PC-9 (cell line): ENCODE measurements at regions of chr4 and their contacts with region 1.

Region 1: GRCh38 chr4:183182873-183183725 is 84.0 kb downstream of the WWC2 start:
- DNase-seq: peak; percentile 73 to 84
- H3K4me3 ChIP-seq: no peak overlapping the region
- H3K27ac ChIP-seq: 0 out of 2 replicates have a peak overlapping the region, but pooled peaks have one; percentile 29
- H3K4me1 ChIP-seq: peaks cover 15% of the 10 kb centered on the region; the same call in 1 of the 2 replicates
- H3K27me3 ChIP-seq: no peaks in the 10 kb centered on the region
- CTCF ChIP-seq: no peak

Region 2: DNA sequence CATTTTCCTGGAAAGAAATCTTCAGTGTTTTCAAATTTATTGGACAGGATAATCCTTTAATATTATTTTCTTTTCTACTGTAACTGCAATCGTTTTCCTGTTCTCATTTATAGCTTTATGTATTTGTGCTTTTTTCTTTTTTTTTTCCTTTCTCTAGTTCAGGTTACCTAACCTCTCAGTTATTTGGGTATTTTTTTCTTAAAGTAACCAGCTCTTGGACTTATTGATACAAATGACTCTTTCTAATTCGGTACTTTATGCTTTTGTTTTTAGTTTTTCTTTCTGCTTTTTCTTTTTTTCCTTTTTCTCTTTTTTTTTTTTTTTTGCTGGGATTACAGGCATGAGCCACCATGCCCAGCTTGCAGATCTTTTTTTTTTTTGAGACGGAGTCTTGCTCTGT is 58.9 kb before region 1 on chr4:
- CTCF ChIA-PET with region 1: no interaction called
- POLR2A ChIA-PET with region 1: interaction called, 27 read pairs
- intact Hi-C with region 1: no loop called
- DNase-seq: no peak
- H3K4me3 ChIP-seq: no peak overlapping the region
- H3K27ac ChIP-seq: no peak overlapping the region
- H3K4me1 ChIP-seq: peaks cover 2% of the 10 kb centered on the region
- H3K27me3 ChIP-seq: no peaks in the 10 kb centered on the region
- CTCF ChIP-seq: no peak

Region 3: GRCh38 chr4:183130328-183131173 is 52.5 kb before region 1 on chr4:
- CTCF ChIA-PET with region 1: no interaction called
- POLR2A ChIA-PET with region 1: no interaction called
- intact Hi-C with region 1: loop called (anchors 5 kb)
- DNase-seq: peak; percentile 49 to 58
- H3K4me3 ChIP-seq: no peak overlapping the region
- H3K27ac ChIP-seq: no peak overlapping the region
- H3K4me1 ChIP-seq: peaks cover 9% of the 10 kb centered on the region; the same call in 1 of the 2 replicates
- H3K27me3 ChIP-seq: no peaks in the 10 kb centered on the region
- CTCF ChIP-seq: no peak

Region 4: DNA sequence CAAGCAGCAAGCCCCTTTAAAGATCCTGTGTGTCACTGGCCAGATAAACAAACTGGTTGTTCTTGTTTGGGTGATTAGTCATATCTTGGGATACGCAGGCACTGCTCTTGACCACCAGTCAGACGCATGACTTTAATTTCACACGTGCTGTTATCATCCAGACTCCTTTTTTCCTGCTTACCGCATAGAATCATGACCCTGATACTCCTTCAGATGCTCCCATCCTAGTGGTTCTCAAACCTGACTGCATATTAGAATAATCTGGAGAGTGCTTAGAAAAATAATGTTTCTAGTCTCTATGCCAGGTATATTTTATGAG is 58.2 kb after region 1 on chr4:
- CTCF ChIA-PET with region 1: no interaction called
- POLR2A ChIA-PET with region 1: no interaction called
- intact Hi-C with region 1: loop called (anchors 2 kb)
- DNase-seq: peak; percentile 51 to 87
- H3K4me3 ChIP-seq: no peak overlapping the region
- H3K27ac ChIP-seq: peak overlapping the region; percentile 57
- H3K4me1 ChIP-seq: peaks cover 28% of the 10 kb centered on the region
- H3K27me3 ChIP-seq: no peaks in the 10 kb centered on the region
- CTCF ChIP-seq: no peak

Region 5: DNA sequence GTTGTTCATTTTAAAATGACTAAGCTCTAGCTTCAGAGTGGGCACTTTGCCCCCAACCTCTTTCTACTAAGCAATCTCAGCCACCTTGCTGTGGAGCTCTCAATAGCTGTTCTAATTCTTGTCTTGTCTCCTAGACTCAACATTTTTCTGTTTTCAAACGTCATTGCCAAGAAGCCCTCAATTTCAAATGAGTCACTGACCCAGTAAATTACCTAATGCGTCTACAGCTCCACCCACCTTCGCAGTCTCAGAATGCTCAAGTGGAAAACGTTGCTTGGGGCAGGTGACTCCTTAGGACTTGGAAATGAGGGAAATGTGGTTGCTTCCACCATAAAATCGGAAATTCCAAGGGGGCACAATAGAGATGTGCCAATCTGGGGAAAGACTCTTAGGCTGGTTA is 380.8 kb after region 1 on chr4:
- CTCF ChIA-PET with region 1: no interaction called
- POLR2A ChIA-PET with region 1: no interaction called
- intact Hi-C with region 1: no loop called
- DNase-seq: peak in 1 of 2 experiments; percentile 5
- H3K4me3 ChIP-seq: no peak overlapping the region
- H3K27ac ChIP-seq: no peak overlapping the region
- H3K4me1 ChIP-seq: no peaks in the 10 kb centered on the region
- H3K27me3 ChIP-seq: no peaks in the 10 kb centered on the region
- CTCF ChIP-seq: no peak

Region 6: GRCh38 chr4:183876268-183876934 is 693.3 kb after region 1 on chr4:
- CTCF ChIA-PET with region 1: no interaction called
- POLR2A ChIA-PET with region 1: no interaction called
- intact Hi-C with region 1: no loop called
- DNase-seq: peak in 1 of 2 experiments; percentile 49
- H3K4me3 ChIP-seq: no peak overlapping the region
- H3K27ac ChIP-seq: no peak overlapping the region
- H3K4me1 ChIP-seq: no peaks in the 10 kb centered on the region
- H3K27me3 ChIP-seq: no peaks in the 10 kb centered on the region
- CTCF ChIP-seq: no peak